ENCODE measurements at regions of chr11 and their contacts with region 1.

Region 1: DNA sequence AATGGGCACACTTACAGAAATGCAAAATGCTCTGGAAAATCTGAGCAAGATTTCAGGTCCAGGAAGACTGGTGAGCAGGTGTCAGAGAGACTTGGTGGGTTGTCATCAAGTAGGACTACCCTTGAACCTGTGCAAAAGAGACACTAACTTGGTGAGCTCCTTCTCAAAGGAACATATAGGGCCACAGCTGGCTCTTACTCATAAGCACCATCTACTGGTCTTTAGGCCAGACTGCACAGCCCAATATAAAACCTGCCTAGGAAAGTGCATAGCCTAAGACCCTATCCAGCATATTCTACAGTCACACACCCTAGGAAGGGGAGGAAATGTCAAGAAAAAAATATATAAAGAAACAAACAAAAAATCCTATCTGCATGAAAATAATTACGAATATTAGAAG is 18.2 kb upstream of the OR10W1 start:
- DNase-seq: peak; percentile 60
- ATAC-seq: peak; percentile 98
- H3K4me3 ChIP-seq: no peak overlapping the region
- H3K27ac ChIP-seq: no peak overlapping the region
- H3K4me1 ChIP-seq: peaks cover 10% of the 10 kb centered on the region; the same call in 1 of the 2 replicates
- H3K27me3 ChIP-seq: no peaks in the 10 kb centered on the region
- CTCF ChIP-seq: peak; percentile 75
- POLR2A ChIP-seq: no peak
- RAD21 ChIP-seq: peak; percentile 76

Region 2: GRCh38 chr11:57741132-57742086 is 544.8 kb before region 1 on chr11 and contains the start of gene SELENOH:
- CTCF ChIA-PET with region 1: no interaction called
- POLR2A ChIA-PET with region 1: no interaction called
- dilution Hi-C with region 1: no loop called
- in situ Hi-C with region 1: no loop called
- intact Hi-C with region 1: loop called (anchors 10 kb)
- DNase-seq: peak; percentile 98
- ATAC-seq: peak; percentile 97
- H3K4me3 ChIP-seq: peak within 1 kb of the TSS; percentile 63
- H3K27ac ChIP-seq: peak within 1 kb of the TSS; percentile 86
- H3K4me1 ChIP-seq: peaks cover 2% of the 10 kb centered on the region; the same call in 1 of the 2 replicates
- H3K27me3 ChIP-seq: no peaks in the 10 kb centered on the region
- CTCF ChIP-seq: no peak
- POLR2A ChIP-seq: peak; percentile 88
- RAD21 ChIP-seq: no peak; the same call in 1 of the 2 replicates
- total RNA-seq, gene SELENOH: 40.3 and 48.9 TPM in 2 replicates

Region 3: DNA sequence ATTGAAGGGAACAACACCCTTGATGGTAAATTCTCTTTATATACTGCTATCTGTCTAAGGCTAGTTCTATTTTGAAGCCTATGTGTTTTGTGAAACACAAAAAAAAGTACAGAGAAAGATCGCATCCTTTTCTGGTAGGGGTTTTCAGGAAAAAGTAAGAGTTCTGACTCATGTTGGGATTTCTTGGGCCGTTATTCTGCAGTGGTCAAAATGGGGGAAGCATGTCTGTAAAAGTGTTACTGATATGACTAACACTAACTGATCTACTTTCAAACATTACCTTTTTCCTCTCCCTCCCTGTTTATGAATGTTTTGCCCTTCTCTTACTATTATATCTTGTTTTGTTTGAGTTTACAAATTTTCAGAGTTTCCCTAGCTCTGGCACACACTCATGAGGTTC is 470.8 kb before region 1 on chr11:
- CTCF ChIA-PET with region 1: no interaction called
- POLR2A ChIA-PET with region 1: no interaction called
- dilution Hi-C with region 1: no loop called
- in situ Hi-C with region 1: no loop called
- intact Hi-C with region 1: loop called (anchors 5 kb)
- DNase-seq: no peak
- ATAC-seq: no peak
- H3K4me3 ChIP-seq: no peak overlapping the region
- H3K27ac ChIP-seq: no peak overlapping the region
- H3K4me1 ChIP-seq: peaks cover 2% of the 10 kb centered on the region; the same call in 1 of the 2 replicates
- H3K27me3 ChIP-seq: no peaks in the 10 kb centered on the region
- CTCF ChIP-seq: no peak
- POLR2A ChIP-seq: no peak
- RAD21 ChIP-seq: no peak

Region 4: GRCh38 chr11:58142761-58143160 is 143.5 kb before region 1 on chr11:
- CTCF ChIA-PET with region 1: no interaction called
- POLR2A ChIA-PET with region 1: no interaction called
- dilution Hi-C with region 1: no loop called
- in situ Hi-C with region 1: no loop called
- intact Hi-C with region 1: no loop called
- DNase-seq: no peak
- ATAC-seq: no peak
- H3K4me3 ChIP-seq: no peak overlapping the region
- H3K27ac ChIP-seq: no peak overlapping the region
- H3K4me1 ChIP-seq: no peaks in the 10 kb centered on the region
- H3K27me3 ChIP-seq: no peaks in the 10 kb centered on the region
- CTCF ChIP-seq: no peak
- POLR2A ChIP-seq: no peak
- RAD21 ChIP-seq: no peak

Region 5: GRCh38 chr11:58647141-58647699 is 361.0 kb after region 1 on chr11:
- CTCF ChIA-PET with region 1: no interaction called
- POLR2A ChIA-PET with region 1: no interaction called
- dilution Hi-C with region 1: no loop called
- in situ Hi-C with region 1: no loop called
- intact Hi-C with region 1: no loop called
- DNase-seq: no peak
- ATAC-seq: no peak
- H3K4me3 ChIP-seq: no peak overlapping the region
- H3K27ac ChIP-seq: no peak overlapping the region
- H3K4me1 ChIP-seq: 0 out of 2 replicates have a peak, but pooled peaks cover 2% of the 10 kb centered on the region
- H3K27me3 ChIP-seq: no peaks in the 10 kb centered on the region
- CTCF ChIP-seq: no peak
- POLR2A ChIP-seq: no peak
- RAD21 ChIP-seq: no peak